Activated CD4-positive, alpha-beta memory T cell treated with anti-CD3 and anti-CD28 coated beads for 36 hours (primary cell): ENCODE measurements at regions of chr17 and their contacts with region 1.

Region 1: DNA sequence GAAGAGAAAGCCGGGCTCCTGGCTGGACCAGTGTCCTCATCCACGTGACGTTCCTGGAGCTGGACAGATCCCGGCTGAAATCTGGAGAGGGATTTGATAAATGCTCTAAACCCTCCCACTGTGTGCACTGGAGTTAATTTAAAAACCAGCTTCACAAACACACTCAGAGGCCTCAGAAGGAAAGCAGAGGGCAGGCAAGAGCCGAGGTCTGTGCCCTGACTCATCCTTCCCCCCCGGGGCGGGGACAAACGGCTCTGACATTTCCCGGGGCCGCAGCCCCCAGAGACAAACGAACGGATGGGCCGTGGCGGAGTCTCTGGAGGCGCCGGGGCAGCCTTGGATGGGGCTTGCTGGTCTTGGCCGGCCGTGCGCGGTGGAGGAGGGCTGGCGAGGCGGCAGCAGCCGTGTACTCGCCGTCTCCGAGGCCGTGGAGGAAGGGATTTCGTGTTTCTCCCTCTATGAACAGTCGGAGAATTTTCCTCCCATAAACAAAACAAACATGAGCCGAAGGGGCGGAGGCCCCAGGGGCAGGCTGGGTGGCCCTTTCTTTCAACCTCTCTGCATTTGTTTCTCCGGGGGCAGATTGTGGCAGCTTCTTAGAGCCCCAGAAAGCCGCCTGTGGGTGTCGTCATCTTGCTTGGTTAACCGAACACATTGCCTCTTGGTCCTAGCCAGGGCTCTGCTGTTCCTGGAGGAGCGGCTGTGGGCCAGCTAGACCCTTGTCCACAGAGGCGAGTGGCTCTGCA is 94.3 kb downstream of the NTN1 start:
- DNase-seq: peak; percentile 67
- H3K4me3 Mint-ChIP-seq: peak overlapping the region; percentile 39
- H3K27ac Mint-ChIP-seq: no peak overlapping the region
- H3K4me1 Mint-ChIP-seq: peaks cover 4% of the 10 kb centered on the region
- H3K27me3 Mint-ChIP-seq: peaks cover 15% of the 10 kb centered on the region

Region 2: GRCh38 chr17:9090641-9091096 is 24.9 kb before region 1 on chr17:
- CTCF ChIA-PET with region 1: no interaction called
- POLR2A ChIA-PET with region 1: no interaction called
- intact Hi-C with region 1: no loop called
- DNase-seq: no peak
- H3K4me3 Mint-ChIP-seq: no peak overlapping the region
- H3K27ac Mint-ChIP-seq: no peak overlapping the region
- H3K4me1 Mint-ChIP-seq: no peaks in the 10 kb centered on the region
- H3K27me3 Mint-ChIP-seq: no peaks in the 10 kb centered on the region

Region 3: GRCh38 chr17:9144502-9145249 is 29.1 kb after region 1 on chr17:
- CTCF ChIA-PET with region 1: no interaction called
- POLR2A ChIA-PET with region 1: no interaction called
- intact Hi-C with region 1: no loop called
- DNase-seq: no peak
- H3K4me3 Mint-ChIP-seq: no peak overlapping the region
- H3K27ac Mint-ChIP-seq: no peak overlapping the region
- H3K4me1 Mint-ChIP-seq: no peaks in the 10 kb centered on the region
- H3K27me3 Mint-ChIP-seq: peaks cover 4% of the 10 kb centered on the region

Region 4: DNA sequence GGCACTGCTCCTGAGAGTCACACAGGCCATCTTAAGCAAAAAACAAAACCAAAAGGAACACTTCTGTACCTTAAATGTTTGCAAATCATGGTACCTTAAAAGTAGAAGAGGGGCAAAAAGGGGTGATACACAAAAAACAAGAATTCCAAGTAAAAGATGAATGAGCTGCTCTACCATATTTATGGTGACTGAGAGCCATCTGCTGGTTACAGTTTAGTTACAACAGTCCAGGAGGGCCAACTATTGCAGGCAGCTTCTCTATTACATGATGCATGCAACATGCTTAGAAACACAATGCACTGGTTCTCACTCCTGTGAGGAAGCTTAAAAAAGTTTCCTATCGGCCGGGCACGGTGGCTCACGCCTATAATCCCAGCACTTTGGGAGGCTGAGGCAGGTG is 406.5 kb after region 1 on chr17:
- CTCF ChIA-PET with region 1: interaction called, 6 read pairs
- POLR2A ChIA-PET with region 1: no interaction called
- intact Hi-C with region 1: loop called (anchors 10 kb)
- DNase-seq: no peak
- H3K4me3 Mint-ChIP-seq: no peak overlapping the region
- H3K27ac Mint-ChIP-seq: no peak overlapping the region
- H3K4me1 Mint-ChIP-seq: peaks cover 13% of the 10 kb centered on the region
- H3K27me3 Mint-ChIP-seq: no peaks in the 10 kb centered on the region